Activated CD4-positive, alpha-beta T cell treated with anti-CD3 and anti-CD28 coated beads for 36 hours (primary cell): ENCODE measurements at regions of chrX and their contacts with region 1.

Region 1: GRCh38 chrX:18036394-18036793 is 175.3 kb upstream of the RAI2 start:
- DNase-seq: no peak
- ATAC-seq: no peak
- H3K4me3 Mint-ChIP-seq: no peak overlapping the region
- H3K27ac Mint-ChIP-seq: no peak overlapping the region
- H3K4me1 Mint-ChIP-seq: peaks cover 5% of the 10 kb centered on the region
- H3K27me3 Mint-ChIP-seq: peaks cover 1% of the 10 kb centered on the region

Region 2: GRCh38 chrX:17987783-17988182 is 48.6 kb before region 1 on chrX:
- CTCF ChIA-PET with region 1: no interaction called
- POLR2A ChIA-PET with region 1: no interaction called
- intact Hi-C with region 1: loop called in 1 of 2 experiments (anchors 5 kb)
- DNase-seq: no peak
- ATAC-seq: peak; percentile 80
- H3K4me3 Mint-ChIP-seq: no peak overlapping the region
- H3K27ac Mint-ChIP-seq: no peak overlapping the region
- H3K4me1 Mint-ChIP-seq: peaks cover 31% of the 10 kb centered on the region
- H3K27me3 Mint-ChIP-seq: no peaks in the 10 kb centered on the region